ENCODE measurements at regions of chr21 and their contacts with region 1.

Region 1: DNA sequence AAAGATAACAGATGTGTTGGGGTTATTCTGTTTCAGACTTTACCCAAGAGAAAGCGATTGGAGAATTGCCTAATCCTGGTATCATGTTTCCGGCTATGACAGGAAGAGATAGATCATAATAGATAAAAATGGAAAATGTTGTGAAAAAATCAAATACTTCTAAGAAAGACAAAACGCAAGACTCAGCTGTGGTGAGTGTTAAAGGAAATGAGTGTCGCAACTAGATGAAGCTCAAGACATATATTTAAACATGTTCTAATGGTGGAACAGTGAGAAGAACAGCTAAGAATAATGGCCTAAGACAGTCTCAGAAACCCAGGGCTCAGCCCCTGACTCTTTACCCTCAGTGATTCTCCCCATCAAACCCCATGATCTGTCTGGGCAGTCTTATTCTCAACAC is 426.7 kb upstream of the RUNX1 start:
- H3K4me3 Mint-ChIP-seq: no peak overlapping the region
- H3K27ac Mint-ChIP-seq: peak overlapping the region; percentile 92
- H3K4me1 Mint-ChIP-seq: peaks cover 79% of the 10 kb centered on the region
- H3K27me3 Mint-ChIP-seq: no peaks in the 10 kb centered on the region

Region 2: DNA sequence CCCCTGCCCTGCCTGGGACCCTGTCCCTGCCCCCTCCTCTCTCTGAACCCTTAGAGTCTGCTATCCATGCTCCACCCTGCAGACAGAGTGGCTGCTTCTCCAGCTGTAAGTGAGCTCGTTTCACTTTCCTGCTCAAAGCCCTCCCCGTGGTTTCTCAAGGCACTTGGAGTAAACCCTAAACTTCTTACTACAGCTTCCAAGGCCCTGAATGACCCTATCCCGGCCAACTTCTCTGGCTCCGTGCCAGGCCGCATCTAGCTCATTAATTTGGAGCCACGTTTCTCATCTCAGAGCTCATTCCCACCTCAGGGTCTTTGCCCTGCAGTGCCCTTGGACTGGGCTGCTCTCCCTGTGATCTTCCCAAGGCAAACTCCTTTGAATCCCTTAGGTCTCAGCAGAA is 191.6 kb before region 1 on chr21:
- intact Hi-C with region 1: loop called (anchors 5 kb)
- H3K4me3 Mint-ChIP-seq: no peak overlapping the region
- H3K27ac Mint-ChIP-seq: peak overlapping the region; percentile 92
- H3K4me1 Mint-ChIP-seq: peaks cover 46% of the 10 kb centered on the region
- H3K27me3 Mint-ChIP-seq: no peaks in the 10 kb centered on the region

Region 3: DNA sequence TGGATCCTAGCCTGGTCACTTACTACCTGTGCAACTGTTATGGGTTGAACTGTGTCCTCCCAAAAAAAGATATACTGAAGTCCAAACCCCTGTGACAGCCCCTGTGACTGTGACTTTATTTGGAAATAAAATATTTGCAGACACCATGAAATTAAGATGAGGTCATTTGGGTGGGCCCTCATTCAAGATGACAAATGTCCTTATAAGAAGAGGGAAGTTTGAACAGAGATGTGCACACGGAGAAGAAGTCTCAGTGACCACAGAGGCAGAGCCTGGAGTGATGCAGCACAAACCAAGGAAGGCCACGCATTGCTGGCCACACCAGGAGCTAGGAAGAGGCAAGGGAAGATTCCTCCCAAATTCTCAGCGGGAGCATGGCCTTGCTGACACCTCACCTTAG is 177.0 kb before region 1 on chr21:
- intact Hi-C with region 1: loop called (anchors 5 kb)
- H3K4me3 Mint-ChIP-seq: no peak overlapping the region
- H3K27ac Mint-ChIP-seq: peak overlapping the region; percentile 73
- H3K4me1 Mint-ChIP-seq: peaks cover 37% of the 10 kb centered on the region
- H3K27me3 Mint-ChIP-seq: no peaks in the 10 kb centered on the region

Region 4: GRCh38 chr21:35316933-35317332 is 158.8 kb before region 1 on chr21:
- intact Hi-C with region 1: no loop called
- H3K4me3 Mint-ChIP-seq: no peak overlapping the region
- H3K27ac Mint-ChIP-seq: no peak overlapping the region
- H3K4me1 Mint-ChIP-seq: peaks cover 9% of the 10 kb centered on the region
- H3K27me3 Mint-ChIP-seq: peaks cover 24% of the 10 kb centered on the region

Region 5: DNA sequence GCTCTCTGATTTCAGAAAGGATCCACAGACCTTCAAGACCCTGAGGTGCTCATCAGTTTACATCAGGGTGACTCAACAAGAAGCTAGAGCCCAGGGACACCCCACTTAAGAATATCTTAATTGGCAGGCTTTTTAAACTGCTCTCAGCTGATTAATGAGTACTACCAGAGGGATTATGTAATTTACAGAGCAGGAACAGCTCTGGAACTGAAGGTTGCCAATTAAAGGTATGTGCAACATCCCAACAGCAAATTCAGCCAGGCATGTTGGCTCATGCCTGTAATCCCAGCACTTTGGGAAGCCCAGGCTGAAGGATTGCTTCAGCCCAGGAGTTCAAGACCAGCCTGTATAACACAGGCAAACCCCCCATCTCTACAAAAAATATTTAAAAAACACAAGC is 288.8 kb after region 1 on chr21:
- intact Hi-C with region 1: no loop called
- H3K4me3 Mint-ChIP-seq: no peak overlapping the region
- H3K27ac Mint-ChIP-seq: no peak overlapping the region
- H3K4me1 Mint-ChIP-seq: no peaks in the 10 kb centered on the region
- H3K27me3 Mint-ChIP-seq: peaks cover 17% of the 10 kb centered on the region